Activated CD4-positive, alpha-beta T cell treated with anti-CD3 and anti-CD28 coated beads for 36 hours (primary cell): ENCODE measurements at regions of chr17 and their contacts with region 1.

Region 1: DNA sequence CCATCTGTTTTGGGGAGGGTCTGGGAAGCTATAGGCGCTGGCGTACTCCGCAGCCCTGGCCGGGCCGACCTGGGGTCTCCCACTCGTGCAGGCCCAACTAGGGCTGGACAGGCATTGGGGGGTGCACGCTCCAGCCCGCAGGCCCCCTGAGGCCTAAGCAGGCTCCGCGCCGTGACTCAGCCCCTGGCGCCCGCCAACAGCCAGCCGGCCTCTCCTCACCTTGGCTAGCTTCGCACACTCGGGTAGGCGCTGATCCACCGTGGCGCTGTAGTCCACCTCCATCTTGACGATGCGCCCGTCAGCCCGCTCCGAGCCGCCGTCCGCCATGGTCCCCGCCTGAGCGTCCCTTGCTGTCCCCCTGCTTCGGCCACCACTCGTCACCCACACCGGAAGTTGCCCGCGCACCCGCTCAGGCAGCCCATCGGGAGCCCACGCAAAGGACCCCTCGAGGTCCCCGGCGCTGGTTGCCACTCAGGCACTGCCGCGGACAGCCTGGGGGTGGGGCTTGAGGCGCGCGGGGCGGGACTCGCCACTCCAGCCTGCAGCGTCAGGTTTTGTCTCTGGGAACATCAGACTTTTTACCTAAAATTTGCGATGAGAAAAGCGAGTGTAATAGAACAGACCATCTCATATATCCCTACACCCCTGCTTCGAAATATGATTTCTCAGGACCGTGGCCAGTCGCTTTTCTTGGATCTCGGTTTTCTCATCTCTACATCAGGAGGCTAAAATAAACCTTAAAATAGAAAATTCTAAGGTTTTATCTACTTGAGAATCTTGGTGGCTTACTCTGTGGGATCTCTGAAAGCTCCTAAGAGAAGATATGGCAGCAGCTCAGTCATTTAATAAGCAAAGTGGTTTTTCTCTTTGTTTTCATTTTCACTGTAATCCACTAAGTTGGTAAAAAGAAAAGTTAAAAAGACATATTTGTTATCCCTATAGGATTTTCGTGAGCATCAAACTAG is at the start of gene PSMD12:
- DNase-seq: peak; percentile 96
- ATAC-seq: peak; percentile 78
- H3K4me3 Mint-ChIP-seq: peak within 1 kb of the TSS; percentile 94
- H3K27ac Mint-ChIP-seq: peak within 1 kb of the TSS; percentile 96
- H3K4me1 Mint-ChIP-seq: peaks cover 43% of the 10 kb centered on the region
- H3K27me3 Mint-ChIP-seq: no peaks in the 10 kb centered on the region
- total RNA-seq, gene PSMD12: 100 to 101 TPM

Region 2: GRCh38 chr17:67245073-67245755 is 121.3 kb before region 1 on chr17 and contains the start of gene HELZ:
- CTCF ChIA-PET with region 1: no interaction called
- POLR2A ChIA-PET with region 1: interaction called, 3 read pairs
- intact Hi-C with region 1: loop called (anchors 1 to 5 kb)
- DNase-seq: peak; percentile 79
- ATAC-seq: peak; percentile 71
- H3K4me3 Mint-ChIP-seq: peak within 1 kb of the TSS; percentile 94
- H3K27ac Mint-ChIP-seq: peak within 1 kb of the TSS; percentile 85
- H3K4me1 Mint-ChIP-seq: peaks cover 40% of the 10 kb centered on the region
- H3K27me3 Mint-ChIP-seq: peaks cover 2% of the 10 kb centered on the region
- total RNA-seq, gene HELZ: 55.3 to 58.0 TPM

Region 3: GRCh38 chr17:67584991-67585602 is 218.6 kb after region 1 on chr17:
- CTCF ChIA-PET with region 1: no interaction called
- POLR2A ChIA-PET with region 1: no interaction called
- intact Hi-C with region 1: no loop called
- DNase-seq: no peak
- ATAC-seq: no peak
- H3K4me3 Mint-ChIP-seq: no peak overlapping the region
- H3K27ac Mint-ChIP-seq: no peak overlapping the region
- H3K4me1 Mint-ChIP-seq: peaks cover 3% of the 10 kb centered on the region
- H3K27me3 Mint-ChIP-seq: no peaks in the 10 kb centered on the region

Region 4: GRCh38 chr17:68512247-68512982 is 1145.9 kb after region 1 on chr17 and contains the start of gene PRKAR1A:
- CTCF ChIA-PET with region 1: no interaction called
- POLR2A ChIA-PET with region 1: no interaction called
- intact Hi-C with region 1: loop called in 1 of 2 experiments (anchors 2 kb)
- DNase-seq: peak; percentile 95
- ATAC-seq: peak; percentile 92
- H3K4me3 Mint-ChIP-seq: peak within 1 kb of the TSS; percentile 93
- H3K27ac Mint-ChIP-seq: peak within 1 kb of the TSS; percentile 97
- H3K4me1 Mint-ChIP-seq: peaks cover 42% of the 10 kb centered on the region
- H3K27me3 Mint-ChIP-seq: no peaks in the 10 kb centered on the region
- total RNA-seq, gene PRKAR1A: 165 to 167 TPM